Posterior vena cava (tissue), 2 donors: ENCODE measurements at regions of chr10 and their contacts with region 1.

Region 1: GRCh38 chr10:17847585-17848296 is 38.6 kb downstream of the MRC1 start:
- DNase-seq: no peak

Region 2: GRCh38 chr10:18059826-18060559 is 212.3 kb after region 1 on chr10:
- intact Hi-C with region 1: no loop called
- DNase-seq: no peak

Region 3: GRCh38 chr10:18238870-18239485 is 391.2 kb after region 1 on chr10:
- intact Hi-C with region 1: loop called (anchors 10 kb)
- DNase-seq: no peak

Region 4: GRCh38 chr10:18308600-18308999 is 460.9 kb after region 1 on chr10:
- intact Hi-C with region 1: loop called in 1 of 2 experiments (anchors 5 kb)
- DNase-seq: no peak